Dorsolateral prefrontal cortex (tissue), 120 donors: ENCODE measurements at regions of chr1 and their contacts with region 1.

Region 1: DNA sequence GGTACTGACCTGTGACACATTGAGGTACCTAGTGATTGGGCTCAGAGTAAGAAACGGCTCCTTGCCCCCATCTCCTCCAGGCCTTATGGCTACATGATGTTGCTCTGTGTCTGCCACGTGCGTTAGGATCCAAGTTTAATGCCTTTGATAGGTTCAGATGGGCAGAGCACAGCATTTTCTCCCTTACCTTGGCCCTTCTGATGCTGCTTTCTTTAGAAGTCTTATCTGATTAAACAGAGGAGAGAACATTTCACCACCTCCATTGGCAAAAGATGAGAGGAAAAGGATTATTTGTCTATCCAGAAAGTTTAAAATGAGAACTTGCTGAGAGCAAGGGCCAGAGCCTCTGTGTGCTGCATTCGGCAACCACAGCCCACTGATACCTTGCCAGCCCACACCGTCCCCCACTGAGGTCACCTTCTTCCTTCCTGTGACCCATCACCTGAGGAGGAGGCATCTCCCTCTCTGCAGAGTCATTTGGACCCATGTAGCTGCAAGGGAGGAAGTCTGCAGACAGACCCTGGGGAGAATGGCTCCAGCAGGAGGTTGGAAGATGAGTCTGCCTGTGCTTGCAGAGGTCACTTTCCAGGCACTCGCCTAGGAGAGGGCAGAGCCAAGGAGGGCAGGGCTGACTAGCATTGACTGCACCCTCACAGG is 16.7 kb downstream of the SHISA4 start:
- DNase-seq: no peak
- H3K4me3 ChIP-seq: no peak overlapping the region
- H3K27ac ChIP-seq: peak overlapping the region in 37 of 59 donors; percentile 0 to 77 (median 46)
- H3K27me3 ChIP-seq: no peaks in the 10 kb centered on the region
- CTCF ChIP-seq: no peak

Region 2: GRCh38 chr1:201845331-201846083 is 59.9 kb before region 1 on chr1:
- intact Hi-C with region 1: no loop called
- DNase-seq: no peak
- H3K4me3 ChIP-seq: no peak overlapping the region
- H3K27ac ChIP-seq: peak overlapping the region in 1 of 59 donors; percentile 10
- H3K27me3 ChIP-seq: no peaks in the 10 kb centered on the region
- CTCF ChIP-seq: no peak

Region 3: DNA sequence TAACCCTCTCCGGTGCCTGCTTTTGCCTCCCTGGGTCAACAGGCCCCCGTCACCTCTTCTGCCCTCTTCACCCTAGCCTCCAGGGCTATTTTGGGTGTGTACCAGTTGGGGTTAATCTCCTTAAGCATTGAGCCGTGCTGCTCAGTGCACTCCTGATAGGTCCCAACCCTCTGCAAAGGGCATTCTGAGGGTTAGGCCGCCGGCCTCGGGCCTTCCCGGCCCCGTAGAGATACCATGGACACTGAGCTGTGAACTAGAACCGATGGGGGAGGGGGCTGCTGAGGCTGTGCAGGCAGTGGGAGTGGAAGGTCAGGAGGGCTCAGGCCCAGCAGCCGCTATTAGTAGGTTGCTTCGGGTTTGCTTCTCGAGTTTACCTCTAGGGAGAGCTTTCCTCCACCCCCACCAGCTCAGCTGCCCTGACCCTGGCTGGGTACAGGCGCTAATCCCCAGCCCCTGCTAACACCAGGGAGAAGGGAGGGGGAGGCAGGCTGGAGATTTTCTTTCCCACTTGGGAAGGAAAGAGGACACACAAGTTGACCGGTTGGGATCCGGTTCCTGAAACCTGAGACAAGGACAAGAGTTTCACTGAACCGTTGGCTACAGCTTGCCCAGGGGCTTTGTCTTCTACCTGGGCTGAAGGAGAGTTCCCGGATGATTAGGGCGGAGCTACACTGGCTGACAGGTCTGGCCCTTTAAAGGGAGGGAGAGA is 36.2 kb after region 1 on chr1:
- intact Hi-C with region 1: loop called in 1 of 2 experiments (anchors 5 kb)
- DNase-seq: no peak
- H3K4me3 ChIP-seq: peak overlapping the region in 7 of 59 donors; percentile 6 to 69 (median 15)
- H3K27ac ChIP-seq: peak overlapping the region in 1 of 59 donors; percentile 6
- H3K27me3 ChIP-seq: peaks cover 0 to 19% (median 0%) of the 10 kb centered on the region in 45 donors
- CTCF ChIP-seq: no peak

Region 4: GRCh38 chr1:201955009-201955728 is 49.8 kb after region 1 on chr1 and contains the start of gene TIMM17A:
- intact Hi-C with region 1: no loop called
- DNase-seq: peak; percentile 93 to 98 (median 98)
- H3K4me3 ChIP-seq: peak within 1 kb of the TSS; percentile 54 to 100 (median 93)
- H3K27ac ChIP-seq: peak within 1 kb of the TSS in 57 of 59 donors; percentile 26 to 92 (median 83)
- H3K27me3 ChIP-seq: no peaks in the 10 kb centered on the region
- CTCF ChIP-seq: peak in 40 of 56 donors; percentile 7 to 56 (median 34)
- total RNA-seq, gene TIMM17A: 24.0 to 84.7 (median 54.1) TPM

Region 5: DNA sequence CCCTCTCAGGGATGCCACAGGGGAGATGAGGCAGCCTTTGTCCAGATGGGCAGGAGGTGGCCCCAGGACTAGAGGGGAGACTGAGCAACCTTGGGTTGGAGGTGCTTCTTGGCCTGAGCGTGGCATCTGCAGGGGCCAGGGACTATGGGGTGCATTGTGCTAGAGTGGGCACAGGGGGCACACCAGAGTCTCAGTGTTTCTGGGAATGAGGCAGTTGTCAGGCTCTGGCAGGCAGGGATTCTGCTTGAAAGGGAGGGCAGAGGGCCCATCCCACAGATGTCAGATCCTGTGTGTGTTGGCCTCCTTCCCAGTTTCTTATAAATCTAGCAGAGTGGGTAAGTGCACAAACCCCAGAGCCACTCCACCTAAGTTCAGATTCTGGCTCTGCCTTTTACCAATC is 301.9 kb after region 1 on chr1:
- intact Hi-C with region 1: no loop called
- DNase-seq: no peak
- H3K4me3 ChIP-seq: no peak overlapping the region
- H3K27ac ChIP-seq: no peak overlapping the region
- H3K27me3 ChIP-seq: peaks cover 0 to 18% (median 0%) of the 10 kb centered on the region in 45 donors
- CTCF ChIP-seq: no peak